Endothelial cell of umbilical vein (primary cell): ENCODE measurements at regions of chr13 and their contacts with region 1.

Region 1: GRCh38 chr13:80630685-80631121 is 289.8 kb upstream of the SPRY2 start:
- DNase-seq: peak; percentile 85
- H3K4me3 ChIP-seq: no peak overlapping the region
- H3K27ac ChIP-seq: peak overlapping the region; percentile 41
- H3K4me1 ChIP-seq: peaks cover 17% of the 10 kb centered on the region
- H3K27me3 ChIP-seq: no peaks in the 10 kb centered on the region
- CTCF ChIP-seq: no peak
- POLR2A ChIP-seq: no peak

Region 2: GRCh38 chr13:80363890-80364503 is 266.7 kb before region 1 on chr13:
- CTCF ChIA-PET with region 1: interaction called, 5 read pairs
- POLR2A ChIA-PET with region 1: no interaction called
- dilution Hi-C with region 1: no loop called
- intact Hi-C with region 1: loop called (anchors 5 kb)
- DNase-seq: peak; percentile 46
- H3K4me3 ChIP-seq: peak overlapping the region in 1 of 3 experiments; percentile 34
- H3K27ac ChIP-seq: no peak overlapping the region
- H3K4me1 ChIP-seq: peaks cover 5% of the 10 kb centered on the region
- H3K27me3 ChIP-seq: no peaks in the 10 kb centered on the region
- CTCF ChIP-seq: peak; percentile 62 to 65
- POLR2A ChIP-seq: no peak

Region 3: DNA sequence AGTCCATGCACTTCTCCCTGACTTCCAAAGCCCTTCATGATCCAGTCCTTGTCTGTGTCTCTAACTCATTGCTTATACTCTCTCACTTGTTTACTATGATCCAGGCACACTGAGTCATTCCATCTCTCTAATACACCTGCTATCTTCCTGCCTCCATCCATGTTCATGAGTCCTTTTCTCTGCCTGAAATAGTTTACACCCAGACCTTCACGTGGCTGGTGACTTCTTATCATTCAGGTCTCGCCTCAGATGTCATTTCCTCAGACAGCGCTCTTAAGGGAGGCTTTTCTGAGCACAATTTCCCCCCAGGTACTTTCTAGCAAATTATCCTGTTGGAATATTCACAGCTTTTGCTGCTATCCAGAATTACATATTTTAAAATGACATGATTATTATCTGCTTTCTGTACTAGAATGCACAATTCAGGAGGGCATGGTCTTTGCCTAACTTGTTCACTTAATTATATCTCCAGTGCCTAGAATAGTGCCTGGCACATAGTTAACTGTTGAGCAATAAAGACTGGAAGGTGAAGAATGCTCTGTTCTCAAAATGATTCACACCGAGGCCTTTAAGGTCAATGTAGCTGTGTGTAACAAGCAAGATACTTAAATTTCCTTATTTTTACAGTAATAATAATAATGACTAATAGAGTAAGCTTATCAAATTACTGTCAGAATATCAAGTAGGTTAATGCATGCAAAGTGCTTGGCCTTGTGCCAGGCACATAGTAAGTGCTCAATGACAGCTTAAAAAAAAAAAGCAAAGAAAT is 106.1 kb before region 1 on chr13:
- CTCF ChIA-PET with region 1: interaction called, 3 read pairs
- POLR2A ChIA-PET with region 1: no interaction called
- dilution Hi-C with region 1: no loop called
- intact Hi-C with region 1: loop called (anchors 5 kb)
- DNase-seq: peak; percentile 55
- H3K4me3 ChIP-seq: no peak overlapping the region
- H3K27ac ChIP-seq: no peak overlapping the region
- H3K4me1 ChIP-seq: peaks cover 31% of the 10 kb centered on the region
- H3K27me3 ChIP-seq: no peaks in the 10 kb centered on the region
- CTCF ChIP-seq: no peak
- POLR2A ChIP-seq: no peak

Region 4: GRCh38 chr13:80666782-80667552 is 36.3 kb after region 1 on chr13:
- CTCF ChIA-PET with region 1: interaction called, 4 read pairs
- POLR2A ChIA-PET with region 1: no interaction called
- dilution Hi-C with region 1: no loop called
- intact Hi-C with region 1: loop called (anchors 2 kb)
- DNase-seq: no peak
- H3K4me3 ChIP-seq: no peak overlapping the region
- H3K27ac ChIP-seq: no peak overlapping the region
- H3K4me1 ChIP-seq: peaks cover 8% of the 10 kb centered on the region
- H3K27me3 ChIP-seq: no peaks in the 10 kb centered on the region
- CTCF ChIP-seq: no peak
- POLR2A ChIP-seq: no peak

Region 5: GRCh38 chr13:80955501-80955900 is 324.8 kb after region 1 on chr13:
- CTCF ChIA-PET with region 1: interaction called, 6 read pairs
- POLR2A ChIA-PET with region 1: no interaction called
- dilution Hi-C with region 1: no loop called
- intact Hi-C with region 1: loop called (anchors 2 kb)
- DNase-seq: peak; percentile 82
- H3K4me3 ChIP-seq: no peak overlapping the region
- H3K27ac ChIP-seq: peak overlapping the region; percentile 48
- H3K4me1 ChIP-seq: peaks cover 35% of the 10 kb centered on the region
- H3K27me3 ChIP-seq: no peaks in the 10 kb centered on the region
- CTCF ChIP-seq: no peak
- POLR2A ChIP-seq: no peak